ENCODE measurements at regions of chr5 and their contacts with region 1.

Region 1: DNA sequence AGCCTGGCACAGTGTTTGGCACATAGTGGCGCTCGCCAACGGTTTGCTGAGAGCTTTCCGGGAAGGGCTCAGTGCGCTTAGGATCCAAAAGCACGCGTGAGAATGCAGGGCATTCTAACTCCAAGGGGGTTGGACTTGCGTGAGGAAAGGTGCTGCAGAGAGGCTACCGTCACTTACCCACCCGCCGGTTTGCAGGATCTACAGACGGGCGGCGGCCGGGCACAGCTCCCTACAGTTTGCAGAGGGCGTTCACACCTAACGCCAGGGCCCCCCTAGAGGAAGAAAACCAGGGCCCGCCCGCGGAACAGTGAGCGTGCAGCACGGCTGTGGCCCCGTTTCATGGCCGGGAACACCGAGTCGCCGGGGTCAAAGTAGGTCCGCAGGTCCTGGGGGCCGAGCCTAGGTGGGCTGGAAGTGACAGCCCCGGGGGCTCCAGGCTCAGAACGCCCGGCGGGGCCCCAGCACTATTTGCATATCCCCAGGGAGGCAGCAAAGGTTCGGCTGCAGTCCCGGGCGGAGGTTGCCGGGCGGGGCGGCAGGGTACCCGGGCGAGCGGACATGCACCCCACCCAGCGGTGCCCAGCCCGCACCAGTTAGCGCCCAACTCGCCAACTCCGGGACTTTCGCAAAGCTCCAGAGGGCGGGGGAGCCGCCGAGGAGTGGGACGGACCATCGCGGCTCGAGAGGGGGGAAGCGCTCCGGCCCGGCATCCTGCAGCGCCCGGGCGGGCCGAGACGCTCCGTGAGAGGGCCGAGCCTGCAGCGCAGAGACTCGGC is 526 bp upstream of the GALNT10 start:
- DNase-seq: peak; percentile 90
- ATAC-seq: peak; percentile 89

Region 2: GRCh38 chr5:153756540-153756939 is 433.5 kb before region 1 on chr5:
- intact Hi-C with region 1: no loop called
- DNase-seq: no peak
- ATAC-seq: no peak

Region 3: GRCh38 chr5:154072414-154073171 is 117.4 kb before region 1 on chr5:
- intact Hi-C with region 1: loop called (anchors 10 kb)
- DNase-seq: peak; percentile 93
- ATAC-seq: peak; percentile 97

Region 4: DNA sequence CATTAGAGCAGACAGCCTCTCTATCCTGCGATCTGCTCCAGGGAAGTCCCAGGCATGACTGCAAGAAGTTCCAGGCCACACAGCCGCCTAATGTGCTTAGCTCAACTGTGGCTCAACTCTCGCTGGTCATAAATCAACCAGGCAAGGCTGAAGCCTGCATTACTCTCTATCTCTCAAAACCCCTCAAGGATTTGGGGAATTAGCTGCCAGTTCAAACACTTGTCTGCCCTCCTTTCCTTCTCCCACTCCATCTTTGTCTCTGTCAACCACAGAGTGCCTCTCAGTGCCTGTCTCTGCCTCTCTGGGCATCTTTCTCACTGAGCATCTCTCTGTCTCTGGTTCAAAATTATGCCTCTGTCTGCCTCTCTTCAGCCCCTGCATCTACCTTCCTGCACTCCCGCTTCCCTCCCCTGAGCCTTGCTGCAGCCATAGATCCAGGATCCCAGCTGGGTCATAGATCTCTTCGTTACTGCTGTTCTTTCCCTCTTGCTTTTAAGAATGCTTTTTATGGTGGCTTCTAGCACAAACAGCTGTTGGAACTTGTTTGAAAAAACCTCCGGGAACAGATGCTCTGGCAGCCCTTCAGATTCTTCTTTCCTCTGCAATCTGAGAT is 27.4 kb before region 1 on chr5:
- intact Hi-C with region 1: loop called (anchors 1 kb)
- DNase-seq: no peak
- ATAC-seq: peak; percentile 89

Region 5: GRCh38 chr5:154405078-154405792 is 215.2 kb after region 1 on chr5:
- intact Hi-C with region 1: loop called (anchors 10 kb)
- DNase-seq: peak; percentile 88
- ATAC-seq: peak; percentile 98

Measured in sciatic nerve (tissue), 2 donors.